Naive thymus-derived CD4-positive, alpha-beta T cell (primary cell): ENCODE measurements at regions of chr3 and their contacts with region 1.

Region 1: GRCh38 chr3:9168241-9168741 is 81.2 kb downstream of the SRGAP3 start:
- DNase-seq: peak in 6 of 9 donors; percentile 18 to 60 (median 37)
- ATAC-seq: no peak
- H3K4me3 ChIP-seq: no peak overlapping the region
- H3K4me3 Mint-ChIP-seq: peak overlapping the region in 7 of 10 donors; percentile 2 to 70 (median 19)
- H3K27ac ChIP-seq: peak overlapping the region; percentile 29
- H3K27ac Mint-ChIP-seq: peak overlapping the region in 6 of 9 donors; percentile 21 to 76 (median 46)
- H3K4me1 ChIP-seq: peaks cover 29 to 33% of the 10 kb centered on the region in 2 donors
- H3K4me1 Mint-ChIP-seq: peaks cover 7 to 56% (median 46%) of the 10 kb centered on the region in 7 donors
- H3K27me3 ChIP-seq: no peaks in the 10 kb centered on the region
- H3K27me3 Mint-ChIP-seq: no peaks in the 10 kb centered on the region

Region 2: DNA sequence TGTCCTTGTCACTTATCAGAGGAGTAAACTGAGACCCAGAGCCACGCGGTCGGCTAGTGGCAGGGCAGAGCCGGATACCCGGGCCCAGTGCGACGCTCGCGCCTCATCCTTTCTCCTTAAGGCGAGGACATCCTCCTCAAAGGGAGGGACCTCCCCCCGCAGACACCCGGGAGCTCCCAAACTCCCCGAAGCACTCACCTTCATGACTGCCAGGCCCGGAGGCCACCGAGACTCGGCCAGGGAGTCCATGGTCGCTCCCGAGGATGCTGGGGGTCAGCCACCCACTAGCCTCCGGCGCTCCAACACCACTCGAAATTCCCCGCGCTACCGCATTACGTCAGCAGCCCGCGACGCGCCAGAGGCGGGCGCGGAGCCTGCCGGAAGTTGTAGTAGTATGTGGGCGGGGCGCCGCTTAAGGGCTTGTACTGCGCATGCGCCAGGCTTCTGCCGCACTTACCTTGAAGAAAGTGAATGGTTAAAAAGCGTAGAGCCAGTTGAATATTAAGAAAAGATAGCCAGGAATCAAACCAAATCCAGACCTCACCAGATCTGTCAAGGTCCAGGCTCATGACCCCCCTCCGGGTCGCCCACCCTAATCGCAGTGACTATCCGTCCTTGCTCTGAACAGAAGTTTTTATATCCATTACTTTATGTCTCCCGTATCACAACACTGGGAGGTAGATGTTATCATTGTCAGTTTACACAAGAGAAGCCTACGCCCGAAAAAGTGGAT is 205.0 kb before region 1 on chr3 and contains the start of gene RAD18:
- CTCF ChIA-PET with region 1: no interaction called
- POLR2A ChIA-PET with region 1: no interaction called
- intact Hi-C with region 1: loop called in 1 of 2 experiments (anchors 1 kb)
- DNase-seq: peak; percentile 87 to 95 (median 92)
- ATAC-seq: peak; percentile 97
- H3K4me3 ChIP-seq: peak within 1 kb of the TSS; percentile 80
- H3K4me3 Mint-ChIP-seq: peak within 1 kb of the TSS; percentile 85 to 99 (median 96)
- H3K27ac ChIP-seq: peak within 1 kb of the TSS; percentile 94
- H3K27ac Mint-ChIP-seq: peak within 1 kb of the TSS; percentile 94 to 99 (median 97)
- H3K4me1 ChIP-seq: peaks cover 6 to 10% of the 10 kb centered on the region in 2 donors
- H3K4me1 Mint-ChIP-seq: peaks cover 7 to 45% (median 38%) of the 10 kb centered on the region in 7 donors
- H3K27me3 ChIP-seq: no peaks in the 10 kb centered on the region
- H3K27me3 Mint-ChIP-seq: peaks cover 0 to 8% (median 4%) of the 10 kb centered on the region in 5 donors
- total RNA-seq, gene RAD18: 9.3 to 36.4 (median 18.2) TPM

Region 3: DNA sequence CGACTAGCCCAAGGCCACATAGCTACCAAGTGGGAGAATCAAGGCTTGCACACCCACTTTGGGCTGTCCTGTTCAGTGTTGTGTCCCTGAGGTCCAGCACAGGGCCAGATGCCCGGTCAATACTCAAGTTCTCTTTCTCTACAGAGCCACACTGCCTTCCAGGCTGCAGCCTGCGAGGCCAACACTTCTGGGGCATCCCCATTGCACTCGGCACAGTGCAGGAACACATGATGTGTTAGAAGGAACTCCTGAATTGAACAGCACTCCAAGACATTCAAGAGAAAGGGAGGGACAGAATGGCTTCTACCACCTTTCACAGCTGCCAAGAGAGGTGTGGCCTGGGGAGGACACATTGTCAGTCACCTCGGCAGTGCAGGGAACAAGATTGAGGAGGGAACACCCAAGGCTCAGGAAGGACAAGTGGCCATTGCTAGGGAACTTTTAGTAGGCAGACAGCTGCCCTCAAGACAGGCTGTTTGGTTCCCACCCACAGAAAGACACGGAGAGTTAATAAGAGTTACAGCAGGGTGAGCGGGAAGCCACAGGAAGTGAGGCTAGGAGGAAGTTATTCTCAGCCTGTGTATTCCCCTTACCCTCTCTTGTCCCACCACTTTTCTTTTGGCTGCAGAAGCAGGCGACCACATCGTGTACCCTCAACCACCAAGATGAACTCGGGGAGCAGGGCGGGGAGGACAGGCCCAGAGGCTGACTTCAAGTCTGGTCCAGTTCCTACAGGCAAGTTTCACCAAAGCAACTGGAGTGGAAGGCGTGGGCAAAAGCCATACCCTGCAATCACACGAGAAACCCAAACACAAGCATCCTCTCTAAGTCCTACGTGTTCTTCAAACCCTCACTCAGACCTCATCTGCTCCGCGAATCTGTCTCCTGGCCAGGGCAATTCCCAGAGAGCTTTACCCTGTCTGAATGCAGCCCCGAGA is 11.8 kb after region 1 on chr3:
- CTCF ChIA-PET with region 1: interaction called, 3 read pairs
- POLR2A ChIA-PET with region 1: no interaction called
- intact Hi-C with region 1: loop called in 1 of 2 experiments (anchors 1 kb)
- DNase-seq: peak in 4 of 9 donors; percentile 13 to 28 (median 14)
- ATAC-seq: peak; percentile 72
- H3K4me3 ChIP-seq: peak overlapping the region; percentile 50
- H3K4me3 Mint-ChIP-seq: peak overlapping the region; percentile 79 to 88 (median 84)
- H3K27ac ChIP-seq: peak overlapping the region; percentile 4
- H3K27ac Mint-ChIP-seq: peak overlapping the region; percentile 48 to 94 (median 76)
- H3K4me1 ChIP-seq: peaks cover 0 to 20% of the 10 kb centered on the region in 2 donors
- H3K4me1 Mint-ChIP-seq: peaks cover 18 to 48% (median 30%) of the 10 kb centered on the region in 7 donors
- H3K27me3 ChIP-seq: no peaks in the 10 kb centered on the region
- H3K27me3 Mint-ChIP-seq: peaks cover 0 to 5% (median 0%) of the 10 kb centered on the region in 5 donors